ENCODE measurements at regions of chr4 and their contacts with region 1.

Region 1: DNA sequence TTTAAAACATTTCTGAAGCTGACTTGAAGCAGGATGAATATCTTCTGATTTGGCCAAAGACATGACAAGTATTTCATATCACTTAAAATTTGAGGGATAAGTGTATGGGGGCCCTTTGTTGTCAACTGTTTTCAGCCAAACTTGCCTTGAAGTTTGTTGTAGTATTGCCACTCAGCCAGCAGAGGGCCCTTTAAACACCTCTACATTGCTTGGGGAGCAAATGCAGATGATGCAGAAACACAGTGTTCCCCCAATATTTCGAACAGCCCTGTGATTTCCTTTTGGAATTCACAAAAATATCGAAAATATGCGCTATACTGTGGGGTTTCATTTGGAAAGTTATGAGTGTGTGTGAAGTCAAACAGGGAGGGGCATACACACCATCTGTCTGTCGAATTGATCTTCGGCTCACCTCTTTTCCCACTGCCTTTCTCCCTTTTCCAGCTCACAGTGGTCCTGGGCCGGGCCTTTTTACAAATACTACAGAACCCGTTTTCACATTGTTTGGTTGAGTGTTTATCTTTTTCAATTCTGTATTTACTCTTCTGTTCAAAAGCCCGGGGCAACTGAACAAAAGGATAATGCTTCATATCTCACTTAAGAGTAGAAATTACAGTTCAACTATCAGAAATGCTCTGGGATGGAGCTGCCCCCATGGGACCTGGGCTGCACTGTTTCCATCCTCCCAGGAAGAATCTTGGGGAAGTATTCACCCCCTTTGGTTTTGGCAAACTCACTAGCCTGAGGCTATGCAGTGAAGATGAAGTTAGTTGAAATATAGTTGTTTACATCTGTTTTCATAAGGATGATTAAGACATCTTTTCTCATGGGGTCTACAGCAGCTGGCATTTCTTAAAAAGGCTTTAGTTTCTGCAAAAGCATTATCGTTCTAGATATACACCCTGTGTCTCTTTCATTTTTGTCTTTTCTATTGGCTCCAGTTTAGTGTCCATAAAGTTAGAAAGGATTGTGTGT is 137.6 kb downstream of the EGF start:
- DNase-seq: peak in 1 of 5 donors; percentile 36
- H3K4me3 ChIP-seq: no peak overlapping the region
- H3K27ac ChIP-seq: no peak overlapping the region
- H3K4me1 ChIP-seq: no peaks in the 10 kb centered on the region
- H3K27me3 ChIP-seq: no peaks in the 10 kb centered on the region
- CTCF ChIP-seq: peak in 2 of 3 donors; percentile 31 to 46
- EP300 ChIP-seq: no peak
- POLR2A ChIP-seq: no peak

Region 2: GRCh38 chr4:109739570-109739969 is 310.7 kb before region 1 on chr4:
- intact Hi-C with region 1: no loop called
- DNase-seq: no peak
- H3K4me3 ChIP-seq: no peak overlapping the region
- H3K27ac ChIP-seq: no peak overlapping the region
- H3K4me1 ChIP-seq: no peaks in the 10 kb centered on the region
- H3K27me3 ChIP-seq: no peaks in the 10 kb centered on the region
- CTCF ChIP-seq: no peak
- EP300 ChIP-seq: no peak
- POLR2A ChIP-seq: no peak

Region 3: DNA sequence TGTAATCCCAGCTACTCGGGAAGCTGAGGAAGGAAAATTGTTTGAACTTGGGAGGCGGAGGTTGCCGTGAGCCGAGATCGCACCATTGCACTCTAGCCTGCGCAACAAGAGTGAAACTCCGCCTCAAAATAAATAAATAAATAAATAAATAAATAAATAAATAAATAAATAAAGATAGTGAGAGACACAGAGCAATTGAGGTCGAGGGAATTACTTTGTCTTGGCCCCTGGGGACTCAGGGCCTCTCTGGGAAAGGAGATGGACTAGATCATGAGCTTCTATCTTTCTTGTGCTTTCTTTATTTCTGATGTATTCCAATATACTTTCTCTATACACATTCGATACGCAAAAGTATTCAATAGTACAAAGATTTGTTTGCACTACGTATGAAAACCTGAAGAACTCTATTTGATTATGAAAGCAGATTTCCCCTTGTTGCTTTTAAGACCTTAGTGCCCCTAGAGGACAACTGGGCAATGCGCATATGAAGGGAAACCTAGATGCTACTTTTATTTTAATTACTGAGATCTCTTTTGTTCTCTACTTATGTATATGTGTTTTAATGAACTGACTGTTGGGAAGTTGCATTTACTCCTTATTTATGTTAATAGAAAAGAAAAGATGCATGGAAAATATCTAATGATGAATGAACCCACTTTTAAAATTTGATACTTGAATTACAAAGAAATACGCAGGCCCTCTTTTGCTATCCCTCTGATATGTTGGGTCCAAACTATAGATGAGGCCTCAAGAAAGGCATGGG is 160.9 kb after region 1 on chr4:
- intact Hi-C with region 1: loop called in 2 of 4 experiments (anchors 10 kb)
- DNase-seq: no peak
- H3K4me3 ChIP-seq: no peak overlapping the region
- H3K27ac ChIP-seq: no peak overlapping the region
- H3K4me1 ChIP-seq: no peaks in the 10 kb centered on the region
- H3K27me3 ChIP-seq: no peaks in the 10 kb centered on the region
- CTCF ChIP-seq: peak; percentile 17 to 45 (median 28)
- EP300 ChIP-seq: no peak
- POLR2A ChIP-seq: no peak

Measured in ovary (tissue), 10 donors.